Naive thymus-derived CD4-positive, alpha-beta T cell (primary cell): ENCODE measurements at regions of chr1 and their contacts with region 1.

Region 1: GRCh38 chr1:19596714-19597495 is 47.2 kb upstream of the NBL1 start:
- DNase-seq: peak; percentile 86 to 98 (median 97)
- ATAC-seq: peak; percentile 86
- H3K4me3 ChIP-seq: peak overlapping the region; percentile 59
- H3K4me3 Mint-ChIP-seq: peak overlapping the region; percentile 79 to 100 (median 98)
- H3K27ac ChIP-seq: peak overlapping the region; percentile 99
- H3K27ac Mint-ChIP-seq: peak overlapping the region; percentile 98 to 100 (median 99)
- H3K4me1 ChIP-seq: peaks cover 34 to 45% of the 10 kb centered on the region in 2 donors
- H3K4me1 Mint-ChIP-seq: peaks cover 29 to 56% (median 47%) of the 10 kb centered on the region in 7 donors
- H3K27me3 ChIP-seq: no peaks in the 10 kb centered on the region
- H3K27me3 Mint-ChIP-seq: peaks cover 0 to 11% (median 0%) of the 10 kb centered on the region in 5 donors

Region 2: GRCh38 chr1:19209990-19210771 is 386.7 kb before region 1 on chr1 and contains the start of gene UBR4:
- CTCF ChIA-PET with region 1: no interaction called
- POLR2A ChIA-PET with region 1: interaction called, 4 read pairs
- intact Hi-C with region 1: loop called (anchors 1 to 2 kb)
- DNase-seq: peak; percentile 95 to 97 (median 96)
- ATAC-seq: peak; percentile 95
- H3K4me3 ChIP-seq: peak within 1 kb of the TSS; percentile 60
- H3K4me3 Mint-ChIP-seq: peak within 1 kb of the TSS; percentile 83 to 98 (median 94)
- H3K27ac ChIP-seq: peak within 1 kb of the TSS; percentile 85
- H3K27ac Mint-ChIP-seq: peak within 1 kb of the TSS; percentile 94 to 99 (median 97)
- H3K4me1 ChIP-seq: peaks cover 24 to 38% of the 10 kb centered on the region in 2 donors
- H3K4me1 Mint-ChIP-seq: peaks cover 49 to 87% (median 82%) of the 10 kb centered on the region in 7 donors
- H3K27me3 ChIP-seq: no peaks in the 10 kb centered on the region
- H3K27me3 Mint-ChIP-seq: peaks cover 0 to 2% (median 0%) of the 10 kb centered on the region in 5 donors
- total RNA-seq, gene UBR4: 120 to 174 (median 159) TPM

Region 3: DNA sequence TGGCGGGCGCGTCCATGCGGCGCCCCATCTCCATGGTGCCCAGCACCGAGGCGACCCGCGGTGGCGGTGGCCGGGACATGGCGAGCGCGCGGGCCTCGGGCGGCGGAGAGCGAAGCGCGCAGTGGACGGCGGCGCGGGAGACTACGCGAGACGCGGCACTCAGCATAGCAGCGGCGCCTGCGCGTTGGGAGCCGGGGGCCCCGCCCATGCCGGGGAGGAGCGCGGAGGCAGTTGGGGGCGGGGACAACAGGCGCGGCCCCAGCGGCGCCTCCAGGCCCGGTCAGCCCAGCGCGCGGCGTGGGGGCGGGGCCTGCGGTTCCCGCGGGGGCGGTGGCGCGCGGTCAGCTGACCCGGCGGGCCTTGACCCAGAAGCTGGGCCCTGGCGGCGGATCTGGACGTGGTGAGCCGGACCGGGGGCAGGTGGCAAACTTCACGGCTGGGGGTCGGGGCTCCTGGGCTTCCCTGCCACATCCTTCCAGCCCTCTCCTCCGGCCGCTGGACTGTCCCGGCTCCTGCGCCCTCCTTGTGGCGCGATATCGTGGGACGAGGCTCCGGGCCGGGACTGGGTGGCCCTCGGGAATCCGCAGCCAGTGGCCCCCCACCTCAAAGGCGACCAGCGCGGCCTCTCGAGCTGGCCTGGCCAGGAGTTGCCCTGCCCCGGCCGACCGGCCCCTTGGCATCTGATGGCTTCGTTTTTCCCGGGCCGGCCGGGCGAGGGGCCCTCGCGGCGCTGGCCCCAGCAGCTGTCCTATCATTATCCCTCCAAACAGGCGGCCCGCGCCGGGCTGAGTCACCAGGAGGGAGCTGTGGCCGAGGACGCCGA is 284.7 kb before region 1 on chr1 and contains the starts of genes AKR7A2 and SLC66A1:
- CTCF ChIA-PET with region 1: no interaction called
- POLR2A ChIA-PET with region 1: no interaction called
- intact Hi-C with region 1: loop called (anchors 1 kb)
- DNase-seq: peak; percentile 68 to 97 (median 91)
- ATAC-seq: peak; percentile 98
- H3K4me3 ChIP-seq: peak within 1 kb of the TSS; percentile 76
- H3K4me3 Mint-ChIP-seq: peak within 1 kb of the TSS; percentile 86 to 94 (median 91)
- H3K27ac ChIP-seq: peak within 1 kb of the TSS; percentile 85
- H3K27ac Mint-ChIP-seq: peak within 1 kb of the TSS; percentile 33 to 83 (median 80)
- H3K4me1 ChIP-seq: peaks cover 16 to 17% of the 10 kb centered on the region in 2 donors
- H3K4me1 Mint-ChIP-seq: peaks cover 29 to 49% (median 44%) of the 10 kb centered on the region in 7 donors
- H3K27me3 ChIP-seq: no peaks in the 10 kb centered on the region
- H3K27me3 Mint-ChIP-seq: no peaks in the 10 kb centered on the region
- total RNA-seq, gene AKR7A2: 15.7 to 33.9 (median 25.2) TPM
- total RNA-seq, gene SLC66A1: 3.8 to 8.4 (median 7.2) TPM

Region 4: GRCh38 chr1:19462781-19463503 is 134.0 kb before region 1 on chr1:
- CTCF ChIA-PET with region 1: no interaction called
- POLR2A ChIA-PET with region 1: interaction called, 28 read pairs
- intact Hi-C with region 1: loop called (anchors 1 to 2 kb)
- DNase-seq: peak in 7 of 9 donors; percentile 69 to 88 (median 82)
- ATAC-seq: peak; percentile 90
- H3K4me3 ChIP-seq: peak overlapping the region; percentile 49
- H3K4me3 Mint-ChIP-seq: peak overlapping the region; percentile 66 to 87 (median 82)
- H3K27ac ChIP-seq: peak overlapping the region; percentile 84
- H3K27ac Mint-ChIP-seq: peak overlapping the region; percentile 86 to 98 (median 95)
- H3K4me1 ChIP-seq: peaks cover 88 to 92% of the 10 kb centered on the region in 2 donors
- H3K4me1 Mint-ChIP-seq: peaks cover 59 to 94% (median 84%) of the 10 kb centered on the region in 7 donors
- H3K27me3 ChIP-seq: no peaks in the 10 kb centered on the region
- H3K27me3 Mint-ChIP-seq: no peaks in the 10 kb centered on the region

Region 5: DNA sequence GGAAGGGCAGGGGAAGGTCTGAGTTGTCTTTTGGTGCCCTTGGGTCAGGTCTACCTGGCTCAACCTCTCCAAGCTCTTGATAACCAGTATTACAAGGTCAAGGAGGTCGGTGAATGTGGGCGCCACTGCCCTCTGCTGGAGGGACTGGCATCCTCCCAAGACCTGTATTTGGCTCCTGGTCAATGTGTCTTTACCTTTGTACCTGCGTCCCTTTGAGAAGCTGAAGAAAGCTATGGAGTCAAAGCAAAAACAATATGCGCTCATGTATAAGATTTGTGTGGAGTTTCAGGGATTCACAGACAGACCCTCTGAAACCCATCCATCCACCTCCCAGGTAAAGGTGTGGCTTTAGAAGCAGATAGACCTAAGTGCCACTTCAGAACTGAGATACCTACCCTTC is 14.6 kb before region 1 on chr1:
- CTCF ChIA-PET with region 1: interaction called, 7 read pairs
- POLR2A ChIA-PET with region 1: interaction called, 5 read pairs
- intact Hi-C with region 1: loop called in 1 of 2 experiments (anchors 1 kb)
- DNase-seq: peak; percentile 37 to 72 (median 59)
- ATAC-seq: peak; percentile 94
- H3K4me3 ChIP-seq: no peak overlapping the region
- H3K4me3 Mint-ChIP-seq: no peak overlapping the region
- H3K27ac ChIP-seq: no peak overlapping the region
- H3K27ac Mint-ChIP-seq: peak overlapping the region in 2 of 9 donors; percentile 15 to 76
- H3K4me1 ChIP-seq: no peaks in the 10 kb centered on the region
- H3K4me1 Mint-ChIP-seq: peaks cover 5 to 15% (median 12%) of the 10 kb centered on the region in 7 donors
- H3K27me3 ChIP-seq: no peaks in the 10 kb centered on the region
- H3K27me3 Mint-ChIP-seq: peaks cover 0 to 8% (median 0%) of the 10 kb centered on the region in 5 donors

Region 6: GRCh38 chr1:19643602-19644394 is 46.9 kb after region 1 on chr1 and contains the start of gene NBL1:
- CTCF ChIA-PET with region 1: interaction called, 7 read pairs
- POLR2A ChIA-PET with region 1: interaction called, 87 read pairs
- intact Hi-C with region 1: loop called (anchors 1 kb)
- DNase-seq: peak; percentile 60 to 86 (median 71)
- ATAC-seq: peak; percentile 93
- H3K4me3 ChIP-seq: peak within 1 kb of the TSS; percentile 62
- H3K4me3 Mint-ChIP-seq: peak within 1 kb of the TSS; percentile 87 to 100 (median 97)
- H3K27ac ChIP-seq: peak within 1 kb of the TSS; percentile 69
- H3K27ac Mint-ChIP-seq: peak within 1 kb of the TSS; percentile 80 to 98 (median 92)
- H3K4me1 ChIP-seq: peaks cover 6 to 7% of the 10 kb centered on the region in 2 donors
- H3K4me1 Mint-ChIP-seq: peaks cover 17 to 38% (median 33%) of the 10 kb centered on the region in 7 donors
- H3K27me3 ChIP-seq: no peaks in the 10 kb centered on the region
- H3K27me3 Mint-ChIP-seq: peaks cover 0 to 29% (median 8%) of the 10 kb centered on the region in 5 donors
- total RNA-seq, gene NBL1: 20.7 to 36.1 (median 22.8) TPM